ENCODE measurements at regions of chr3 and their contacts with region 1.

Region 1: GRCh38 chr3:129120254-129121004 is 1.2 kb downstream of the RAB43 start:
- DNase-seq: peak; percentile 96
- H3K4me3 Mint-ChIP-seq: peak overlapping the region; percentile 91
- H3K27ac Mint-ChIP-seq: peak overlapping the region; percentile 96
- H3K4me1 Mint-ChIP-seq: peaks cover 53% of the 10 kb centered on the region
- H3K27me3 Mint-ChIP-seq: no peaks in the 10 kb centered on the region

Region 2: GRCh38 chr3:128879125-128879969 is 241.1 kb before region 1 on chr3 and contains the start of gene ACAD9:
- CTCF ChIA-PET with region 1: no interaction called
- POLR2A ChIA-PET with region 1: interaction called, 23 read pairs
- DNase-seq: peak; percentile 98
- H3K4me3 Mint-ChIP-seq: peak within 1 kb of the TSS; percentile 85
- H3K27ac Mint-ChIP-seq: peak within 1 kb of the TSS; percentile 86
- H3K4me1 Mint-ChIP-seq: peaks cover 64% of the 10 kb centered on the region
- H3K27me3 Mint-ChIP-seq: peaks cover 3% of the 10 kb centered on the region
- total RNA-seq, gene ACAD9: 42.7 to 48.4 TPM

Region 3: DNA sequence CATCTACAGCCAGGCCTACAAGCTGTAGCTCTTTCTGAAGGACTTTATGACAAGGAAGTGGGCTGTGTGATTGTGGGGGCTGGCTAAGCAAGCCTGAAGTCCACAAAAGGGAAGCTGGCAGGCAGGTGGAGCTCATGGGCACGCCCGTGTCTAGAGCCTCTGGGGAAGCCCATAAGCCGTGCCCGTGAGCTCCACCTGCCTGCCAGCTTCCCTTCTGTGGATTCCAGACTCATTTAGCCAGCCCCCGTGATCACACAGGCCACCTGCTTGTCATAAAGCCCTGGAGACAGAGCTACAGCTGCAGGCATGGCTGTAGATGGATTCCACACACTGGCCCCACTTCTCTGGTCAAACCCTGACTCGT is 104.1 kb before region 1 on chr3:
- CTCF ChIA-PET with region 1: interaction called, 7 read pairs
- POLR2A ChIA-PET with region 1: interaction called, 48 read pairs
- DNase-seq: peak; percentile 68
- H3K4me3 Mint-ChIP-seq: peak overlapping the region; percentile 64
- H3K27ac Mint-ChIP-seq: peak overlapping the region; percentile 87
- H3K4me1 Mint-ChIP-seq: peaks cover 37% of the 10 kb centered on the region
- H3K27me3 Mint-ChIP-seq: no peaks in the 10 kb centered on the region

Region 4: DNA sequence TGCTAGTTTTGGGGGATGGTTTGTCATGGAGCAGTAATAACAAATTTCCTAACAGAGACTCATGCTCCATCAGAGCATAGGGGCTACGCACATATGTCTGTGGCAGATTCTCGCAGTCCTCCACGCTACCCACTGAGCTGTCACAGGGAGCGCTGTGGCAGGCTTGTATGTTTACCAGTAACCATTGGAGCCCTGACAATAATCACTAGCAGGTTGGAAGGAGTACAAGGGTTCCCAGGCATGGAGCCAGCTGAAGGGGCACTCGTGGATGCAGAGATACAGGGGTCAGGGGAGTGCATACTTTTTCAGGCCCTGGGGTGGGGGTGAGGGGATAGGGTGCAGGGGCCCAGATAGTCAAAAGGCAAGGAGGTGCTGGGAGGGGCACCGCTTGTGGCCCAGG is 67.8 kb before region 1 on chr3:
- CTCF ChIA-PET with region 1: interaction called, 63 read pairs
- POLR2A ChIA-PET with region 1: interaction called, 61 read pairs
- DNase-seq: no peak
- H3K4me3 Mint-ChIP-seq: no peak overlapping the region
- H3K27ac Mint-ChIP-seq: peak overlapping the region; percentile 28
- H3K4me1 Mint-ChIP-seq: peaks cover 7% of the 10 kb centered on the region
- H3K27me3 Mint-ChIP-seq: peaks cover 18% of the 10 kb centered on the region

Region 5: DNA sequence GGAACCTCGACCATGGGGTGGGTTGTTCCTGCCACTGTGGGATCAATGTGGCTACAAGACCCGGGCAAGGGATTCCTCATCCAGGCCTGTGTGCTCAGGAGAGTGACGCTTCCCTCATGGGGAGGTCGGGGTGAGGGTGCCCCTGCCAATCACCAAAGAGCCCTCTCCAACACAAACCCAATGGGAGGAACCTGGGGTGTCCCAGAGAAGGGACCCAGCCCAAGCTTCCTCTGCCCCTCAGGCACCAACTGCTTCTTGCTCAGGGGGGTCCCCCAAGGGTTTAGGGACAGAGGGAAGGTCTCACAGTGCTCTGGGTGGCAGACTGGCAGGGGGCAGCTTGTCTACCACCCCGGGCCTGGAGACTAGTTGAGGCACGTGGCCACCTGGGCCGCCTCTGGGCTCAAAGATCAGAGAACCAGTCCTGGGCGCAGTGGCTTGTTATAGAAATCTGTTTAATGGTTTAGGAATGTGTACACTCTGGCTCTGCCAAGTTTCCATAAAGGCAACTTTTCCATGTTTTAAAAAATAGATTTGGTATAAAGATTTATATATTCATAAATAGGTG is 33.2 kb before region 1 on chr3:
- CTCF ChIA-PET with region 1: no interaction called
- POLR2A ChIA-PET with region 1: no interaction called
- DNase-seq: no peak
- H3K4me3 Mint-ChIP-seq: no peak overlapping the region
- H3K27ac Mint-ChIP-seq: no peak overlapping the region
- H3K4me1 Mint-ChIP-seq: no peaks in the 10 kb centered on the region
- H3K27me3 Mint-ChIP-seq: no peaks in the 10 kb centered on the region

Region 6: DNA sequence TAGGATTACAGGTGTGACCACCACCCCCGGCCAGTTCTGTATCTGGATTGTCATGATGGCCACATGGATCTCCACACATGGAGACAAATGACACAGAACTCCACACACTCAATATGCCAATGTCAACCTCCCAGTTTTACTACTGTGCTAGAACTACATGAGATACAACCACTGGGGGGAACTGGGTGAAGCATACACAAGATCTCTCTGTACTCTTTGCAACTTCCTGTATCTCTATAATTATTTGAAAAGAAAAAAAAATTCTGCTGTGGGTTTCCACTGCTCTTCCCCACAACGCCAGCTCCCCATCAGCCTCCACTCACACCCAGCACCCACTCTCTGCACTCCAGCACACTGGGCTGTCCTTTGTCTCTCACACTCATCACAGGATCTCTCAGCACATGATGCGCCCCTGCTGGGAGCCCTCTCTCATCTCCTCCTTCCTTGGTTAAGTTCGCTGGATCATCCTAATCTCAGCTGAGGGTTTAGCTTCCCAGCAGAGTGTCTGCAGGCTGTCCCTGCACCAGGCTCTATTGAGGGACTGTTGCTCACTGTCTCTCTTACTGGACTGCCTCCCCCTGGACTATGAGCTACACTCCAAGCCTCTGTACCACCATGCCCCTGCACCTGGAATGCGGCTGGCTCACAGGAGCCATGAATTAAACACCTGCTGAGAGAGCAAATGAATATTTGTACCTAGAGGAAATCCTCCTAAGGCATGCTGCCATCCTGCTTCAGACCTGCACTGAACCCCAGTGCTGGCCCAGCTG is 11.9 kb after region 1 on chr3:
- CTCF ChIA-PET with region 1: interaction called, 4 read pairs
- POLR2A ChIA-PET with region 1: interaction called, 29 read pairs
- DNase-seq: no peak
- H3K4me3 Mint-ChIP-seq: no peak overlapping the region
- H3K27ac Mint-ChIP-seq: no peak overlapping the region
- H3K4me1 Mint-ChIP-seq: no peaks in the 10 kb centered on the region
- H3K27me3 Mint-ChIP-seq: no peaks in the 10 kb centered on the region

Region 7: GRCh38 chr3:129233538-129233937 is 113.1 kb after region 1 on chr3:
- CTCF ChIA-PET with region 1: interaction called, 11 read pairs
- POLR2A ChIA-PET with region 1: interaction called, 59 read pairs
- DNase-seq: no peak
- H3K4me3 Mint-ChIP-seq: no peak overlapping the region
- H3K27ac Mint-ChIP-seq: peak overlapping the region; percentile 64
- H3K4me1 Mint-ChIP-seq: peaks cover 77% of the 10 kb centered on the region
- H3K27me3 Mint-ChIP-seq: no peaks in the 10 kb centered on the region

Region 8: GRCh38 chr3:129278439-129278970 is 158.1 kb after region 1 on chr3 and contains the start of gene HMCES:
- CTCF ChIA-PET with region 1: no interaction called
- POLR2A ChIA-PET with region 1: interaction called, 13 read pairs
- DNase-seq: peak; percentile 94
- H3K4me3 Mint-ChIP-seq: peak within 1 kb of the TSS; percentile 97
- H3K27ac Mint-ChIP-seq: peak within 1 kb of the TSS; percentile 91
- H3K4me1 Mint-ChIP-seq: peaks cover 51% of the 10 kb centered on the region
- H3K27me3 Mint-ChIP-seq: no peaks in the 10 kb centered on the region
- total RNA-seq, gene HMCES: 45.7 to 50.1 TPM

Region 9: DNA sequence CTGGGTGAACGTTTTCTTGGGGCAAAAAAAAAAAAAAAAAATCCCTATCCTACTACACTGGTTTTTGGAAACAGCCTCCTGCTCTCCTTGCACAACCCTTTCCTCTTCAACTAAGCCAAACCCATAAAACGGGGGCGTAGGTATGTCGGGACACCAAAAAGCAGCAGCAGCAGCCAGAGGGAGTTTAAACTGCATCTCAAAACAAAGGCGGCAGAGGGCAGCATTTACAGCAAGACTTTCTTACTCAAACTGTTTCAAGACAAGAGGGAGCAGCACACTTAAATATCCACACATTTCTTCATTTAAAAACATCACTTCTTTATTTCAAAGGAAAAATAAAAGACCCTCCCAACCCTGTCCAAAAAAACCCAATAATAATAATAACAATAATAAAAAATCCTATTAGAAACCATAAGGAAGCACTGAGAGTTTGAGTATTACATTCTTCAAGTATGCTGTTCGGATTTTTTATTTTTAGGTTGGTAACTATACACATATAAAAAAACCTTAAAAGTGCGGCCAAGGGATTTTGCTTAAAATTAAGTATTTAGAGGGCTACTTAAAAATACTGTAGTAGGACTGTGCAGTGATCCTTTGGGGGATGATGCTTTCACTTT is 529.9 kb after region 1 on chr3:
- CTCF ChIA-PET with region 1: no interaction called
- POLR2A ChIA-PET with region 1: no interaction called
- DNase-seq: peak; percentile 68
- H3K4me3 Mint-ChIP-seq: no peak overlapping the region
- H3K27ac Mint-ChIP-seq: no peak overlapping the region
- H3K4me1 Mint-ChIP-seq: no peaks in the 10 kb centered on the region
- H3K27me3 Mint-ChIP-seq: no peaks in the 10 kb centered on the region

Measured in activated CD4-positive, alpha-beta memory T cell treated with anti-CD3 and anti-CD28 coated beads, Interleukin-2, amount 10 ng/mL, durations not matched to agents 7 days and 5 days (primary cell).